CD8-positive, alpha-beta T cell (primary cell): ENCODE measurements at regions of chr18 and their contacts with region 1.

Region 1: GRCh38 chr18:74204526-74205152 is 56.3 kb downstream of the TIMM21 start:
- DNase-seq: peak in 2 of 9 experiments; percentile 34 to 35
- ATAC-seq: no peak
- H3K4me3 ChIP-seq: no peak overlapping the region
- H3K4me3 Mint-ChIP-seq: no peak overlapping the region
- H3K27ac ChIP-seq: no peak overlapping the region
- H3K27ac Mint-ChIP-seq: no peak overlapping the region
- H3K4me1 ChIP-seq: no peaks in the 10 kb centered on the region
- H3K4me1 Mint-ChIP-seq: no peaks in the 10 kb centered on the region
- H3K27me3 ChIP-seq: no peaks in the 10 kb centered on the region
- H3K27me3 Mint-ChIP-seq: peaks cover 5% of the 10 kb centered on the region
- CTCF ChIP-seq: no peak

Region 2: DNA sequence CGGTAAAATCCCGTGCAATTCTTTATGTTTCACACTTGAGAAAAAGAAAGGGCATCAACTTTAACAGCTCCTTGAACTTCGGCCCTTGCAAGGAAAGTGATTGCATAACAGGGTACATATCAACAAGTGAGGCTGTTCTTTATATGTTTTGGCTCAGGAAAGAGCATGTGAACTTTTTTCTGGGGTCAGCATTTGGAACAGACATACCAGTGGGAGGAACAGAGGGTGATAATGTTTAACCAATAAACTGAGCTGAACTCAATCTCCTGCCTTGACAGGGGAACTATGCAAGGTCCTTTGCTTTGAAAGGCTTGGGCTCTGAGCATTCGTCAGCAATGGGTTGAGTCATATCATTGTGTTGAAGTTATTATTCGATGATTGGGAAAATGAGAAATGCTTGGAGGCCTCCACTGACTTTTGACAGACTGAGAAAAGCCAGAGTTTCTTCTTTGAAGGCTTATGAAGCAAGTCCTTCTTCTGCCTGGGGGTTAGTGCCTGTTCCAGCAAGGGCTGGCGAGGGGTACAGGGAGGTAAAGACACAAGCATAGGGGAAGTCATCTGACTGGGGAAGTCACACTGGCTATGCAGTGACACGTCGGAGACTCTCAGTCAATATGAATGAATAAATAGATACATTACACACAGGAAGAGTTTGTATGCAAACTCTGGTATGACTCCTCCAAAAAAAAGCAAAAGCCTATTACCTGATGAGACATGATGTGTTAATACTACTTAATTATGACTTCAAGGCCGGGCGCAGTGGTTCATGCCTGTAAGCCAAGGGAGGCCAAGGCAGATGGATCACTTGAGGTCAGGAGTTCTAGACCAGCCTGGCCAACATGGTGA is 29.9 kb after region 1 on chr18:
- CTCF ChIA-PET with region 1: no interaction called
- POLR2A ChIA-PET with region 1: no interaction called
- intact Hi-C with region 1: no loop called
- DNase-seq: no peak
- ATAC-seq: no peak
- H3K4me3 ChIP-seq: no peak overlapping the region
- H3K4me3 Mint-ChIP-seq: no peak overlapping the region
- H3K27ac ChIP-seq: no peak overlapping the region
- H3K27ac Mint-ChIP-seq: no peak overlapping the region
- H3K4me1 ChIP-seq: no peaks in the 10 kb centered on the region
- H3K4me1 Mint-ChIP-seq: no peaks in the 10 kb centered on the region
- H3K27me3 ChIP-seq: no peaks in the 10 kb centered on the region
- H3K27me3 Mint-ChIP-seq: peaks cover 19% of the 10 kb centered on the region
- CTCF ChIP-seq: no peak

Region 3: GRCh38 chr18:74251297-74252038 is 46.8 kb after region 1 on chr18:
- CTCF ChIA-PET with region 1: no interaction called
- POLR2A ChIA-PET with region 1: no interaction called
- intact Hi-C with region 1: loop called in 1 of 2 experiments (anchors 2 kb)
- DNase-seq: no peak
- ATAC-seq: no peak
- H3K4me3 ChIP-seq: no peak overlapping the region
- H3K4me3 Mint-ChIP-seq: no peak overlapping the region
- H3K27ac ChIP-seq: no peak overlapping the region
- H3K27ac Mint-ChIP-seq: no peak overlapping the region
- H3K4me1 ChIP-seq: no peaks in the 10 kb centered on the region
- H3K4me1 Mint-ChIP-seq: no peaks in the 10 kb centered on the region
- H3K27me3 ChIP-seq: no peaks in the 10 kb centered on the region
- H3K27me3 Mint-ChIP-seq: no peaks in the 10 kb centered on the region
- CTCF ChIP-seq: no peak